Colonic mucosa (tissue), 4 donors: ENCODE measurements at regions of chr17 and their contacts with region 1.

Region 1: DNA sequence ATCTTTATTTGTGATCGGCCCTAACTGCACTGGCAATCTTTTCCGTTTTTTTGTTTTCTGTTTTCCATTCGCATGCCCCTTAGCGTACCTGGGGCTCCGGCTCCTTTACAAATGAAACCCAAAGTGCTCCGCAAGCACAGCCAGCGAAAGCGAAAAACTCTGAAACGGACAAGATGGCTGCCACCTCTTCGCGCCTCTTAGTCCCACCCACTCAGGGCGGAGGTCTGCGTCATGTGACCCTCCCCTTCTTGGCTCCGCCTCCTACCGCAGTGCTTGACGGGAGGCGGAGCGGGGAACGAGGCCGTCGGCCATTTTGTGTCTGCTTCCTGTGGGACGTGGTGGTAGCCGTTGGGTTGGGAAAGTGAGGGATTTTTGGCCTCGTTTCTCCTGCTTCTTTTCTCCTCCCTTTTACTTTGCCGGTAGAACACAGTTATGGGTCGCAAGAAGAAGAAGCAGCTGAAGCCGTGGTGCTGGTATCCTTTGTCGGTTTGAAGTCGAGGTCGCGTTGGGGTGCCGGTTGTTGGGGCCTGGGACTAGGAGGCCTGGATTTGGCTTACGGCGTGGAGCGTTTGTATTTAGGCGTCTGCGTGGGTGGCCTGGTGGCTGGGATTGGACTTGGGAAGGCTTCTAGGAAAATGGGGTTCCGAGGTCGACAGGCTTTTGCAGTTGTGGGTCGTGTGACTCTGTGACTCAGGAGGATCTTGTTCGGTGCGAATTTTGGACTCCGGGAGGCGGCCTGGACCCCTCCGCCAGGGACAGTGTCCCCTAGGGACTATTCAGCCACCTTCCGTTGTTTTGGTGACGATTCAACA is at the start of gene ZNF207:
- DNase-seq: peak; percentile 95
- H3K4me3 ChIP-seq: peak within 1 kb of the TSS; percentile 86
- H3K27ac ChIP-seq: peak within 1 kb of the TSS; percentile 96
- H3K4me1 ChIP-seq: peaks cover 13% of the 10 kb centered on the region
- H3K27me3 ChIP-seq: no peaks in the 10 kb centered on the region
- CTCF ChIP-seq: no peak
- total RNA-seq, gene ZNF207: 147 to 151 TPM

Region 2: GRCh38 chr17:32444308-32445073 is 94.4 kb after region 1 on chr17 and contains the start of gene PSMD11:
- intact Hi-C with region 1: loop called (anchors 10 kb)
- DNase-seq: peak; percentile 99
- H3K4me3 ChIP-seq: peak within 1 kb of the TSS; percentile 86
- H3K27ac ChIP-seq: peak within 1 kb of the TSS; percentile 47
- H3K4me1 ChIP-seq: peaks cover 10% of the 10 kb centered on the region
- H3K27me3 ChIP-seq: no peaks in the 10 kb centered on the region
- CTCF ChIP-seq: peak; percentile 0
- total RNA-seq, gene PSMD11: 81.2 to 117 TPM